ENCODE measurements at regions of chr20 and their contacts with region 1.

Region 1: DNA sequence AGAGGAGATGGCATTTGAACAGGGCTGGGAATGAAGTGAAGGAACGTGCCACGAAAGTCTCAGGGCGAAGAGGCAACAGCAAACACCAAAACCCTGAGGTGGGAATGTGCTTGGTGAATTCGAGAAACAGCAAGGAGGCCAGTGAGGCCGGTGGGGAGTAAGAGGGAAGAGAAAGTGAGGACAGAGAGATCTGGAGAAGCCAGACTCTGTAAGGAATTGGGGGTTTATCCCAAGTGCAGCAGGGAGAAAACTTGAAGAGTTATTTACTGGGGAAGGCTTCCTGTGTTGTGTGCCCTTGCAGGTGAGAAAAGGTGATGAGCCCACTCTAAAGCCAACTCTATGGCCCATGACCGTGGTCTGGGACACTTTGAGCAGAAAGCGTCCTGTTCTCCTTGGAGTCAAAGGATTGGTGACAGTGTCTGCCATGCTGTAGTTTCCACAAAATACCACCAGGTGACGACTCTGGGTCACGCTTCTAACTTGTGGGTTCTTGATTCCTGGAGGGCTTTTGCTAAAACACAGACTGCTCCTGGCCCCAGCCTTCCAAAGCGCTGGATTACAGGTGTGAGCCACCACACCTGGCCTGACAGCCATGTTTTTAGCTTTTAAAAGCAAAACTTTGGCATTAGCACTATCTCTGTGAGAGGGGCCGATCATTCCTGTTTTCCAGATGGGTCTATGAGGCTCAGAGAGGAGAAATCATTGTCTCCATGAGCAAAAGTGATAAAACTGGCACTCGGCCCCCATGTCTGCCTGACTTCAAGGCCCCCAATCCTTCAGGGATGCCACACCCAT is 18.0 kb upstream of the CSNK2A1 start:
- DNase-seq: peak; percentile 41 to 44
- ATAC-seq: peak; percentile 86

Region 2: DNA sequence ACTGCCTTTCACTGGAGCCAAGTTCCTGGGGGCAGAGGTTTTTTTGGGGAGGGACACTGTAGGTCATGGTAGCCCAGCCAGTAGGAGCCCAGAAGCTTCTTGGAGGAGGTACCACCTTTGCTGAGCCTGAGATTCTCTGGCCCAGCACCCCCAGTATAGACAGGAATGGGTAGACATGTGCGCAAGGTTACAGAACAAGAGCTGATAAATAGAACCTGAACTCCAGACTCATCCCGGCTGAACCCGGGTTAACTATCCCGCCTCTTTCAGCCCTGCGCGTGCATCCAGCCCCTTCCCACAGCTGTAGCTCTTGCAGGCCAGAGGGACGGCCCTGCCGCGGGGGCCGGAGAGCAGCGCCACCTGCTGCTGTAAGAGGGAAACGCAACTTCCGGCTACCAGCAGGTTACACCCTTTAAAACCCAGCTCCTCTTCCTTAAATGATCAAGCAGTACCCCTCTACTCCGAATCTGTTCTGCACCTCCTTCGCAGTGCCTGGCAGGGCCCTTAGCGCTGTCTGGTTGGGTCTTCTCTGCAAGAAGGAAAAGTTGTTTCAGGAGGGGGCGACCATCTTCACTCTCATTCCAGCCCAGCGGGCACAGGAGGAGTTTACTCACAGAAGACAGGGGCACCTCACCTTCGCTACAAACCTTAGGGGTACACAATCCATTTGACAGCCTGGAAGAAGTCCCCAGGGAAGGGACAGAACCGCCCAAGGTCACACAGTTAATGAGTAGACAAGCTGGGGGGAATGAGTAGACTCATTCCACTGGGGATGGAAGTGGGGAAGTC is 83.9 kb after region 1 on chr20:
- intact Hi-C with region 1: loop called in 1 of 2 experiments (anchors 2 kb)
- DNase-seq: peak in 1 of 2 donors; percentile 68
- ATAC-seq: peak; percentile 91

Region 3: DNA sequence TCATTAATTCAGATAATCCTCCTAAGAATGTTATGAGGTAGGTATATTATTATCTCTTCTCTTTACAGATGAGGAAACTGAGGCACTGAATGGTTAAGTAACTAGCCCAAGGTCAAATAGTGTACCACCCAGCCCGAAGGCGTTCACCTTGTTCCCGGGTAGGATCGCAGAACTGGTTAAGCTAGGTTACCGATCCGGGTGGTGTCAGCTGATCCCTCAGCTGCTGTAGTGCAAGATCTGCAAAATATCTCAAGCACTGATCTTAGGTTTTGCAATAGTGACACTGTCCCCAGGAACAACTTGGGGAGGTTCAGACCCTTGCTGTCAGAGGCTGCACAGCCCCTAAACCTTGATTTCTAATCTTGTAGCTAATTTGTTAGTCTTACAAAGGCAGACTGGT is 178.5 kb after region 1 on chr20:
- intact Hi-C with region 1: loop called in 1 of 2 experiments (anchors 5 kb)
- DNase-seq: no peak
- ATAC-seq: no peak

Measured in left colon (tissue), 2 donors.